Calu3 (cell line): ENCODE measurements at regions of chr3 and their contacts with region 1.

Region 1: GRCh38 chr3:48635222-48636021 is at the start of gene SLC26A6:
- DNase-seq: peak; percentile 97
- H3K4me3 Mint-ChIP-seq: peak within 1 kb of the TSS; percentile 72
- H3K27ac Mint-ChIP-seq: no peak within 1 kb of the TSS
- H3K4me1 Mint-ChIP-seq: no peaks in the 10 kb centered on the region
- H3K27me3 Mint-ChIP-seq: no peaks in the 10 kb centered on the region
- CTCF ChIP-seq: no peak
- total RNA-seq, gene SLC26A6: 21.6 and 27.0 TPM in 2 replicates

Region 2: DNA sequence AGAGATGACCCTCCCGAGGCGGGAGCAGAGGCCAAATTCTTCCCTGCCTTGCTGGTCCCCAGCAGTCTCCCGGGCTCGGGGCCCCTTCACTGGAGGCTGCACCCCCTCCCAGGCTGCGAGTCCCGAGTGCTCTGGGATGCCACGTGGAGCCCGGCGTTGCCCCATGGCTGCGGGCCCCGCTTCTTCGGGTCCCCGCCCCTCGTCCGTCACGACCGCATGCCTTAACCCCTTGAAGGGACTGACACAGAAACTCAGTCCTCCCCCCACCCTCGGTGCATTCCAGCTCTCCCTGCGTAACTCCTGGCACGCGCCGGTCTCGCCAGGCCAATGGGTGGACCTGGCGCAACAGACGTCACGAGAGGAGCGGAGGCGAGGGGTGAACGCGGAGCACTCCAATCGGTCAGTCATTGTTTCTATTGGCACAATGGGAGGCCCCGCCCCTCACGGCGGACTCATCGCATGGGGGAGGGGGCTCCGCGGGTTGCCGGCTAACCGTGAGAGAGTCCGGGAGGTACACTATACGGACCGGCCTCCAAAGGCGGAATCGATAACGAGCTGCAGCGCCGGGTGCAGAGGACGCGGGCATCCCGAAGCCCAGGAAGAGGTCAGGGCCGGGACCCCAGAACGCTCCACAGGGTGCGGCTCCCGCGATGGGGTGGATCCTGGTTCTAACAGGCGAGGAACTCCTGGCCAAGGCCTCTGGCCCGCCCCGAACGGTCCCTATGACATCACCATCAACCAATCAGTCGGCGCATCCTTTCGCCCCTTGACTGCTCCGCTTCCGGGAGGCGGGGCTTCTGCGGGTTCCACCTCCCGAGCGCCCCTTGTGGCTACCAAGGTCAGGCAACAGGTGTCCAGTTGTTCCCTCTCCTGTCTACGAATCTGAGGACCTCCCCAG is 28.2 kb after region 1 on chr3:
- CTCF ChIA-PET with region 1: interaction called, 3 read pairs
- intact Hi-C with region 1: loop called (anchors 1 kb)
- DNase-seq: peak; percentile 98
- H3K4me3 Mint-ChIP-seq: peak overlapping the region; percentile 96
- H3K27ac Mint-ChIP-seq: peak overlapping the region; percentile 100
- H3K4me1 Mint-ChIP-seq: peaks cover 14% of the 10 kb centered on the region
- H3K27me3 Mint-ChIP-seq: no peaks in the 10 kb centered on the region
- CTCF ChIP-seq: peak; percentile 81